Esophagus muscularis mucosa (tissue), 4 donors: ENCODE measurements at regions of chr11 and their contacts with region 1.

Region 1: DNA sequence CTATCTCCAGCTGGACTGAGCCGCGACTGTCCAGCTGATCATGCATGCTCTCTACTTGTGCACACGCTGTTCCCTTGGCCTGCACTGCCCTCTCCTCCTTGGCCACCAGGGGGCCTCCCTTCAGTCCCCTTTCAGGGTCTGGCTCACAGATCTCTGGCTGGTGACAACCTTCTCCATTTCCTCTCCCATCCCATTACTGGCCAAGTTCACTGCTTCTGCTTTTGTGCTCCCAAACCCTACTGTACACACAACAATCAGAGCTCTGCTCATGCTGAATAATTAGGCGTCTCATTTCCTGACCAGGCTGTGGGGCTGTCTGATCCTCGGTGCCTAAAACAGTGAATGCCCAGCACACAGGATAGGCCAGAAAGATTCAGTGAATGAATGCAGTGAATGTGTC is 224.0 kb upstream of the NARS2 start:
- DNase-seq: peak; percentile 93
- H3K4me3 ChIP-seq: no peak overlapping the region
- H3K27ac ChIP-seq: peak overlapping the region in 3 of 4 donors; percentile 20 to 76 (median 25)
- H3K4me1 ChIP-seq: peaks cover 24 to 62% (median 56%) of the 10 kb centered on the region in 4 donors
- H3K27me3 ChIP-seq: no peaks in the 10 kb centered on the region
- CTCF ChIP-seq: peak; percentile 70 to 89 (median 75)
- EP300 ChIP-seq: no peak
- POLR2A ChIP-seq: no peak

Region 2: DNA sequence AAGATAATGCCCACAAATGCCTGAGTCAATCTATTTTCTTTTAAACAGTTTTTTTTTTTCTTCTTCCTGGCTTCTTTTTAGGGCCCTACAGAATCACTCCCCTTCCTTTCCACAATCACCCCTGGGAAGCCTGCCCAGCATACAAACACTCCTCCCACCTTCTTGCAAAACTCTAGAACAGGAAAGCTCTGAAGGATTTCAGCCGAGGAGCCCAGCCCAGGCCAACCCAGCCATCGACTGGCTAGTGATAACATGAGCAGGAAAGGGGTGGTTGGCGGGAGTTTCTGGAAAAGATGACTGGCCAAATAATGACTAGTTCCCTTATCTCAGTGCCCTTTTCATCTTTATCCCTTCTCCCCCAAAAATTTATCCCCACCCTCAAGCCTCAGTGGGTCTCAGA is 541.7 kb before region 1 on chr11:
- intact Hi-C with region 1: no loop called
- DNase-seq: peak; percentile 91
- H3K4me3 ChIP-seq: no peak overlapping the region
- H3K27ac ChIP-seq: peak overlapping the region; percentile 23 to 54 (median 40)
- H3K4me1 ChIP-seq: peaks cover 15 to 30% (median 19%) of the 10 kb centered on the region in 4 donors
- H3K27me3 ChIP-seq: no peaks in the 10 kb centered on the region
- CTCF ChIP-seq: no peak
- EP300 ChIP-seq: no peak
- POLR2A ChIP-seq: no peak

Region 3: DNA sequence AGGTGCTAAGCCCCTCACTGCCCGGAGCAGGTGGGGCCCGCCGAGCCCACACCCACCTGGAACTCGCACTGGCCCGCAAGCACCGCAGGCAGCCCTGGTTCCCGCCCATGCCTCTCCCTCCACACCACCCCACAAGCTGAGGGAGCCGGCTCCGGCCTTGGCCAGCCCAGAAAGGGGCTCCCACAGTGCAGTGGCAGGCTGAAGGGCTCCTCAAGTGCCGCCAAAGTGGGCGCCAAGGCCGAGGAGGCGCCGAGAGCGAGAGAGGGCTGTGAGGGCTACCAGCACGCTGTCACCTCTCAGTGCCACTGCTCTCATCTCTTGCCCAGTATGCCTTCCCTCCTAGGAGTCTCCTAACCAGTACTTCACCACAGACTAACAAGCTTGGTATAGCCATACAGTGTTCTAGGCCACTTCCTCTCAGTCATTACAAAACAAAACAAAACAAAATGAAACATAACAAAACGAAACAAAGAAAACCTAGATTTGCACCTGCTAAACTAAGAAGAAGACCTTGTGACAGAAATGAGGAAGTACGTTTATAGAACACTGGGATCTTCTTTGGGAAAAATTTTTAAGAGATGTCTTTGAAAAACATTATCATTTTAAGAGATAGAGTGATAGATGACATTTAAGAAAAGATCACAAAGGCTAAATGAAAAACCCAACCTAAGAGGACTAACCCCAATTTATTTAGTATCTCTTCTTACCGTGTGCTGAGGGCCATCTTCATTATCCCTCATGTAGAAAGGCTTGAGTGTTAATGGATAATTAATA is 333.3 kb before region 1 on chr11:
- intact Hi-C with region 1: no loop called
- DNase-seq: no peak
- H3K4me3 ChIP-seq: no peak overlapping the region
- H3K27ac ChIP-seq: no peak overlapping the region
- H3K4me1 ChIP-seq: no peaks in the 10 kb centered on the region
- H3K27me3 ChIP-seq: no peaks in the 10 kb centered on the region
- CTCF ChIP-seq: no peak
- EP300 ChIP-seq: no peak
- POLR2A ChIP-seq: no peak

Region 4: GRCh38 chr11:78759071-78759470 is 39.6 kb before region 1 on chr11:
- intact Hi-C with region 1: no loop called
- DNase-seq: no peak
- H3K4me3 ChIP-seq: no peak overlapping the region
- H3K27ac ChIP-seq: no peak overlapping the region
- H3K4me1 ChIP-seq: peaks cover 0 to 13% (median 9%) of the 10 kb centered on the region in 4 donors
- H3K27me3 ChIP-seq: no peaks in the 10 kb centered on the region
- CTCF ChIP-seq: peak in 1 of 3 experiments; percentile 18
- EP300 ChIP-seq: no peak
- POLR2A ChIP-seq: no peak

Region 5: GRCh38 chr11:78840200-78840599 is 41.5 kb after region 1 on chr11:
- intact Hi-C with region 1: loop called (anchors 5 kb)
- DNase-seq: no peak
- H3K4me3 ChIP-seq: no peak overlapping the region
- H3K27ac ChIP-seq: peak overlapping the region; percentile 53 to 80 (median 64)
- H3K4me1 ChIP-seq: peaks cover 3 to 23% (median 21%) of the 10 kb centered on the region in 4 donors
- H3K27me3 ChIP-seq: no peaks in the 10 kb centered on the region
- CTCF ChIP-seq: no peak
- EP300 ChIP-seq: no peak
- POLR2A ChIP-seq: no peak

Region 6: GRCh38 chr11:78961247-78961646 is 162.6 kb after region 1 on chr11:
- intact Hi-C with region 1: loop called (anchors 10 kb)
- DNase-seq: no peak
- H3K4me3 ChIP-seq: no peak overlapping the region
- H3K27ac ChIP-seq: no peak overlapping the region
- H3K4me1 ChIP-seq: peaks cover 9 to 16% (median 12%) of the 10 kb centered on the region in 4 donors
- H3K27me3 ChIP-seq: peaks cover 0 to 5% (median 0%) of the 10 kb centered on the region in 4 donors
- CTCF ChIP-seq: peak; percentile 26 to 49 (median 33)
- EP300 ChIP-seq: no peak
- POLR2A ChIP-seq: no peak

Region 7: GRCh38 chr11:79092791-79093353 is 294.2 kb after region 1 on chr11:
- intact Hi-C with region 1: loop called (anchors 5 kb)
- DNase-seq: no peak
- H3K4me3 ChIP-seq: no peak overlapping the region
- H3K27ac ChIP-seq: peak overlapping the region; percentile 35 to 76 (median 66)
- H3K4me1 ChIP-seq: peaks cover 0 to 65% (median 26%) of the 10 kb centered on the region in 4 donors
- H3K27me3 ChIP-seq: no peaks in the 10 kb centered on the region
- CTCF ChIP-seq: no peak
- EP300 ChIP-seq: no peak
- POLR2A ChIP-seq: no peak